ENCODE measurements at regions of chr4 and their contacts with region 1.

Region 1: DNA sequence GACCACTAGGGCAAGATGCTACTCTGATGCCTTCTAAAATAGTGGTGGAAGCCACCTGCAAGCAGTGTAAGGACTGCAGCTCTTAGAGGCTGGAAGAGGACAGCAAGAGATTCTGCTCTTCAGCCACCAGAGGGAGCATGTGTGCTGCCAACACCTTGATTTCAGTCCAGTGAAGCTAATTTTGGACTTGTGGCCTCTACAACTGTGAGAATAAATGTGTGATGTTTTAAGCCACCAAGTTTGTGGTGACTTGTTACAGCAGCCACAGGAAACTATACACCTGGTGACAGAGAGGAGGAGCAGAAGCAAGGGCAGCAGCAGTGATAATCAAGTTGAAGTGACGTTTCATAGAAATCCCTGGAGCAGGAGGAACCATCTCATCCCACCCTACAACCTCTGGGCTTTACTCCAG is 55.9 kb downstream of the FGFBP1 start:
- DNase-seq: peak in 4 of 5 donors; percentile 33 to 43 (median 38)
- H3K4me3 ChIP-seq: no peak overlapping the region
- H3K4me3 Mint-ChIP-seq: no peak overlapping the region
- H3K27ac ChIP-seq: no peak overlapping the region
- H3K27ac Mint-ChIP-seq: no peak overlapping the region
- H3K4me1 ChIP-seq: no peaks in the 10 kb centered on the region
- H3K4me1 Mint-ChIP-seq: no peaks in the 10 kb centered on the region
- H3K27me3 ChIP-seq: no peaks in the 10 kb centered on the region
- H3K27me3 Mint-ChIP-seq: peaks cover 7 to 10% of the 10 kb centered on the region in 2 donors

Region 2: DNA sequence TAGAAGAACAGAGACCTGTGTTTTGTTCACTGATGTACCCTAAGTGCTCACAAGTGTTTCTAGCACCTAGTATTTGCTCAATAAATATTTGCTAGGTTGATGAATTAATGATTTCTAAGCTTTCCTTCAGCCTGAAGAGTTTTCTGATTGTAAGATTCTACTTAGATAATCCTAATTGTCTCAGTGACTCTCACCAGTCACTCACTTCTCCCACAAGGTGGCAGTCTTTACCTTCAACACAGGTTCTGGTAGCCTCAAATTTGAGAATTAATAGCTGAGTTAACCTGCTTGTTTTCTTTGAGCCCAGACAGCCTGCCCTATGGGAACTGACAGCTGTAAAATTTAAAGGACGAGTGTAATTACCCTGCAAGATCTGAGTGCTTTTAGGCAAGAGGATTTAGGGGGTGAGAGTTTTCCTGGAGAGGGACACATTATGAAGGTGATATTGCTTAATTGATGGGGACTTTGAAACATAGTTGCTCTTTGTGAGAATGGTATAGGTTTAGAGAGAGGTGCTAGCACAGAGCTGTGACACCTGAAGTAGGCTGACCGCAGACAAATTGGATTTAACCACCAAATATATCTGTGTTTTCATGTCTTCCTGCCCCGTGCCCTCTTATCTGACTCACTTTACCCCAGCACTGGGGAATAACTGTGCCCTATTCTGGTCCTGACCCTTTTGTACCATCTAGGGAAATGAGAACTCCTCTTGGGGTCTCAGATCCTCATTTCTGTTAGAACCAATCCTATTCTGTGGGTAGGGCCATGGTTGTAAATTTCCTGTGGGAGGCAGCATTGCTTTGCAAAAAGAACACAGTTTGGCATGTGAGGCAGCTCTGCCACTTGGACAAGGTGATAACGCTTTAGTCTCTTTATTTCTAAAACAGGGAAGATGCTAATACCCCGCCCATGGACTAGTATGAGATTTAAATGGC is 76.8 kb before region 1 on chr4:
- CTCF ChIA-PET with region 1: interaction called, 30 read pairs
- POLR2A ChIA-PET with region 1: no interaction called
- intact Hi-C with region 1: no loop called
- DNase-seq: peak in 4 of 5 donors; percentile 43 to 53 (median 50)
- H3K4me3 ChIP-seq: no peak overlapping the region
- H3K4me3 Mint-ChIP-seq: no peak overlapping the region
- H3K27ac ChIP-seq: no peak overlapping the region
- H3K27ac Mint-ChIP-seq: no peak overlapping the region
- H3K4me1 ChIP-seq: peaks cover 7% of the 10 kb centered on the region
- H3K4me1 Mint-ChIP-seq: peaks cover 9 to 11% (median 9%) of the 10 kb centered on the region in 4 donors
- H3K27me3 ChIP-seq: no peaks in the 10 kb centered on the region
- H3K27me3 Mint-ChIP-seq: peaks cover 0 to 3% of the 10 kb centered on the region in 2 donors

Region 3: GRCh38 chr4:15832523-15833451 is 49.9 kb before region 1 on chr4:
- CTCF ChIA-PET with region 1: no interaction called
- POLR2A ChIA-PET with region 1: no interaction called
- intact Hi-C with region 1: no loop called
- DNase-seq: no peak
- H3K4me3 ChIP-seq: no peak overlapping the region
- H3K4me3 Mint-ChIP-seq: no peak overlapping the region
- H3K27ac ChIP-seq: no peak overlapping the region
- H3K27ac Mint-ChIP-seq: no peak overlapping the region
- H3K4me1 ChIP-seq: no peaks in the 10 kb centered on the region
- H3K4me1 Mint-ChIP-seq: no peaks in the 10 kb centered on the region
- H3K27me3 ChIP-seq: no peaks in the 10 kb centered on the region
- H3K27me3 Mint-ChIP-seq: no peaks in the 10 kb centered on the region

Region 4: GRCh38 chr4:15868111-15868510 is 14.6 kb before region 1 on chr4:
- CTCF ChIA-PET with region 1: interaction called, 14 read pairs
- POLR2A ChIA-PET with region 1: no interaction called
- intact Hi-C with region 1: no loop called
- DNase-seq: no peak
- H3K4me3 ChIP-seq: no peak overlapping the region
- H3K4me3 Mint-ChIP-seq: no peak overlapping the region
- H3K27ac ChIP-seq: no peak overlapping the region
- H3K27ac Mint-ChIP-seq: peak overlapping the region in 1 of 7 donors; percentile 14
- H3K4me1 ChIP-seq: no peaks in the 10 kb centered on the region
- H3K4me1 Mint-ChIP-seq: no peaks in the 10 kb centered on the region
- H3K27me3 ChIP-seq: no peaks in the 10 kb centered on the region
- H3K27me3 Mint-ChIP-seq: no peaks in the 10 kb centered on the region

Region 5: DNA sequence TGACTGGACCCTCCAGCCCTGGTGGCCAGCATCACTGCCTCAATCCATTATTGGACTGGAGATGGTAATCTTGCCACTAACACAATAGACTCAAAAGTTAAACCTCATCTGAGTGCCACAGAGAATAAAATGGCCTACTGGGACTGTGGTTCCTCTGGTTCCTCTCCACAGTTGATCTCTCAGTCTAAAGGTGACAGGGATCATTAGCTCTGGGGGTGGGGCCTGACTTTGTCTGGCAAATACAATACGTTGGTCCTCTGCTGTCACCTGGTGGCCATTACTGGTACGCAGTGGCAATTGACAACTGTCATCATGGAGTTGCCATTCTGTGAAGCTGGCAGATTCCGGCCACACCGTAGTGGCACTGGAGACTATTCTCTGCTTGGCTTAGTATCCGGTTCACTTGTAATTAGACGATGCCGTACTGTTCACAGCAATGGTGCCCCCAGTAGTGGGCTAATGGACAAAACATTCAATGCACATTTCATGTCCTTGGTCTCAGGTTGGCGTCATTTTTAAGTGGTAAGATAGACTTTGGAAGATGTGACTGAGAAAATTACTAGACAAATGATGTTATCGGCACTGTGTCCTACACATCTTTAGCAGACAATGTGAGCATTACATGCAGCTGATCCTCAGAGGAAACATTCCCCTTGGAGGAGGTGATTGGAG is 73.6 kb after region 1 on chr4:
- CTCF ChIA-PET with region 1: interaction called, 15 read pairs
- POLR2A ChIA-PET with region 1: no interaction called
- intact Hi-C with region 1: loop called (anchors 2 kb)
- DNase-seq: peak; percentile 57 to 75 (median 65)
- H3K4me3 ChIP-seq: no peak overlapping the region
- H3K4me3 Mint-ChIP-seq: no peak overlapping the region
- H3K27ac ChIP-seq: no peak overlapping the region
- H3K27ac Mint-ChIP-seq: no peak overlapping the region
- H3K4me1 ChIP-seq: no peaks in the 10 kb centered on the region
- H3K4me1 Mint-ChIP-seq: peaks cover 0 to 5% (median 3%) of the 10 kb centered on the region in 4 donors
- H3K27me3 ChIP-seq: no peaks in the 10 kb centered on the region
- H3K27me3 Mint-ChIP-seq: peaks cover 6 to 8% of the 10 kb centered on the region in 2 donors

Region 6: GRCh38 chr4:16496501-16496900 is 613.8 kb after region 1 on chr4:
- CTCF ChIA-PET with region 1: no interaction called
- POLR2A ChIA-PET with region 1: no interaction called
- intact Hi-C with region 1: no loop called
- DNase-seq: no peak
- H3K4me3 ChIP-seq: no peak overlapping the region
- H3K4me3 Mint-ChIP-seq: no peak overlapping the region
- H3K27ac ChIP-seq: no peak overlapping the region
- H3K27ac Mint-ChIP-seq: no peak overlapping the region
- H3K4me1 ChIP-seq: no peaks in the 10 kb centered on the region
- H3K4me1 Mint-ChIP-seq: no peaks in the 10 kb centered on the region
- H3K27me3 ChIP-seq: no peaks in the 10 kb centered on the region
- H3K27me3 Mint-ChIP-seq: peaks cover 0 to 2% of the 10 kb centered on the region in 2 donors